WTC11 (cell line): ENCODE measurements at regions of chr11 and their contacts with region 1.

Region 1: DNA sequence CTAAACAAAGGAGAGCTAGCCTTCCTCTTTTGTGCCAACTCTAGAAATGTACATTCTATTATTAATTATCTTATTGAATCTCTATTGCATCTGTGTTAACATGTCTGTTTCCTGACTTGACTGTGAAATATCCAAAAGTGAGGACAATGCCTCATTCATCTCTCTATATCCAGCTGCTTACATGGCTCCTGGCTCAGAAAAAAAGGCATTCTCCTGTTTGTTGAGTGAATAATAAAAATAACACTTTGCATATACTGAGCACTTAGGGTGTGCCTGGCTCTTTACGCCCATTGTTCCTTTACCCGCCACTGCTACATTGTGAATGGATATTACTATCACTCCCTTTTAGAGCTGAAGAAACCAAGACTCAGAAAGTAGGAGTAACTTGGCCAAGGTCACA is 19.9 kb downstream of the NRXN2 start:
- DNase-seq: no peak
- ATAC-seq: no peak
- H3K4me3 Mint-ChIP-seq: no peak overlapping the region
- H3K27ac Mint-ChIP-seq: no peak overlapping the region
- H3K4me1 Mint-ChIP-seq: no peaks in the 10 kb centered on the region; the same call in 1 of the 2 replicates
- H3K27me3 Mint-ChIP-seq: peaks cover 35% of the 10 kb centered on the region
- CTCF ChIP-seq: no peak

Region 2: DNA sequence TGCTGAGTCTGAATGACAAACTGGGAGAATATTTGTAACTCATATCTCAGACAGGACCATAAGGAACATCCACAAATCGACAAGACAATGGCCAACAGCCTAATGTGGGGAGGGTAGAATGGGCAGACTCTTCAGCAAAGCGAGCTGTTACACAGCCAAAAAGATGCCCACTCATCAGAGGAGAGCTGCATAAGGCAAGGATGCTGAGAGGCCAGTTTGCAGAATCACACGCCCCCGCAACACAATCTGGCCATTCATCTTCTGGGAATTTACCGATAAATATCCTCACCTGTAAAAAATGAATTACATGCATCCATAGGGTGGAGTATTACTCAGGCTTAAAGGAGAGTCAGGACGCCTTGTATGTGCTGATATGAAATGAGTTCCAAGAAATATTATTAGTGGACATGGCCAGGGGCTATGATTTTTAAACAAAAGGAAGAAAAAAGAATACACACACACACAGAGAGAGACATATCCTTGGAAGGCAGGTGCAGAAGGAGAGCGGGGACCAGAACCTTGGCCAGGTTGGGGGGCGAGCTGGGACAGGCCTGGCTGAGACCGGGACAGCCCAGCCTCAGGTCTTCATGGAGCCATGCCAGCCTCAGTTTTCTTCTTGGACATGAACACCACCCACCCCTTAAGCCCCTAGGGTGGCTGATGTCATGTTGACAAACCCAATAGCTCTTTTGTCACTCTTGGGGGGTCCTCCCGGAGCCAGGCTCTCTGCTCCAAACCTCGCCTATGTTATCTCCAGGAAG is 169.4 kb before region 1 on chr11:
- CTCF ChIA-PET with region 1: no interaction called
- POLR2A ChIA-PET with region 1: no interaction called
- DNase-seq: no peak
- ATAC-seq: no peak
- H3K4me3 Mint-ChIP-seq: no peak overlapping the region
- H3K27ac Mint-ChIP-seq: no peak overlapping the region
- H3K4me1 Mint-ChIP-seq: no peaks in the 10 kb centered on the region
- H3K27me3 Mint-ChIP-seq: peaks cover 31% of the 10 kb centered on the region
- CTCF ChIP-seq: no peak

Region 3: DNA sequence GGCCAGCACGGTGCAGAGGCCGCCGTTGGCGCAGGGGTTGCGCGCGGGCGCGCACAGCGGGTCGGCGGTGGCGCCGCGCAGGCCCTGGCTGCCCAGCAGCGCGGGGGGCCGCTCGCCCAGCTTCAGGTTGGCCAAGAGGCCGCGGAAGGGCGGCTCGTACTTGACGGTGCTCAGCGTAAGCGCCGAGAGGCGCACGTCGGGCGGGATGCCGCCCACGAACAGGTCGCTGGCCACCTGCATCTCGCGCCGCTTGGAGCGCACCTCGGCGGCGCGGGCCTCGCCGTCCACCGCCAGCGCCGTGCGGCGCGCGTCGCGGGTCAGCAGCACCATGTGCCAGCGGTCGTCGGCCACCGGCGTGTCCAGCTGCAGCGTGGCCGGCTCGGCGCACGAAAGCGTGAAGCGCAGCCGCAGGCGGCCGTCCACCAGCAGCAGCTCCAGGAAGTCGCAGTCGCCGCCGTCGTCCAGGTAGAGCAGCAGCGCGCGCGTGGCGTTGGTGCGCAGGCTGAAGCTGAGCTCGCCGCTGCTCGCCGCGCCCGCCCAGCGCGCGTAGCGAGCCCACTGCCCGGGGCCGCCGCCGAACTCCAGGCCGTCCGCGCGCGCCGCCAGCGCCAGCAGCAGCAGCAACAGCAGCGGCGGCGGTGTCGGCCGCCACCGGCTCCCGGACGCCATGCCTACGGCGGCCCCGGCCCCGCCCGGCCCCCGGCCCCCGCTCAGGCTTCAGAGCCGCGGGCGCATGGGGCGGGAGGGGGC is 10.2 kb after region 1 on chr11:
- CTCF ChIA-PET with region 1: interaction called, 29 read pairs
- POLR2A ChIA-PET with region 1: no interaction called
- DNase-seq: peak; percentile 39
- ATAC-seq: 0 out of 2 replicates have a peak, but pooled peaks have one; percentile 1
- H3K4me3 Mint-ChIP-seq: no peak overlapping the region
- H3K27ac Mint-ChIP-seq: no peak overlapping the region
- H3K4me1 Mint-ChIP-seq: peaks cover 57% of the 10 kb centered on the region
- H3K27me3 Mint-ChIP-seq: peaks cover 73% of the 10 kb centered on the region
- CTCF ChIP-seq: no peak

Region 4: GRCh38 chr11:64996710-64997380 is 293.8 kb after region 1 on chr11 and contains the start of gene BATF2:
- CTCF ChIA-PET with region 1: no interaction called
- POLR2A ChIA-PET with region 1: no interaction called
- DNase-seq: peak; percentile 76
- ATAC-seq: peak; percentile 97
- H3K4me3 Mint-ChIP-seq: peak within 1 kb of the TSS; percentile 56
- H3K27ac Mint-ChIP-seq: peak within 1 kb of the TSS; percentile 78
- H3K4me1 Mint-ChIP-seq: peaks cover 18% of the 10 kb centered on the region
- H3K27me3 Mint-ChIP-seq: no peaks in the 10 kb centered on the region
- CTCF ChIP-seq: no peak
- total RNA-seq, gene BATF2: 1.3 to 3.2 TPM (median 2.2 TPM) in 3 replicates